ENCODE measurements at regions of chr16 and their contacts with region 1.

Region 1: DNA sequence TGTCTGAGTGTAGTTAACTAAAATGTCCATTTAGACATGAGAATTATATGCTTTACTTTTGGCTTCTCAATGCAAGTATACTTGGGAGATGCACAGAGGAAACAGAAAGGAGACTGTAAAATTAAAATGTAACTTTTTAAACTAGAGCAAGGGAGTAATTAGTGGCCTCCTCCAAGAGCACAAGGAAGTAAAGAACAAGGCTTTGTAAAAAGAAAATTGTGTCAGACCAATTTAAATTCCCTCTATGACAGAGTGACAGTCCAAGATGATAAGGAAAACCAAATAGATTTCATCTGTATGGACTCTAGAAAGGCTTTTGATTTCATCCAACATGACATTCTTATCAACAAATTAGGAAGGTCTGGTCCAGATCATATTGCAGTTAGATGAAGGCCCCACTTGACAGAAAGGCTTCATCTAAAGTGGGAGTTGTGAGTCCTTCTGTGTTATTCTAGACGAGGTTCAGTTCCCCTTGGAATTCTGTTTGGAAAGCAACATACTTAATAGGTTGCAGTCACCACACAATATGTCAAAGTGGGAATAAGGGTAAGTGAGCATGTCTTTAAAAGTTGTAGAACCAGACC is 6.5 kb upstream of the CAPNS2 start:
- DNase-seq: no peak
- ATAC-seq: no peak
- H3K4me3 ChIP-seq: no peak overlapping the region
- H3K27ac ChIP-seq: no peak overlapping the region
- H3K4me1 ChIP-seq: peaks cover 1% of the 10 kb centered on the region
- H3K27me3 ChIP-seq: no peaks in the 10 kb centered on the region
- CTCF ChIP-seq: no peak
- POLR2A ChIP-seq: no peak
- RAD21 ChIP-seq: no peak

Region 2: GRCh38 chr16:55534756-55535155 is 25.3 kb before region 1 on chr16:
- CTCF ChIA-PET with region 1: no interaction called
- POLR2A ChIA-PET with region 1: no interaction called
- dilution Hi-C with region 1: no loop called
- in situ Hi-C with region 1: no loop called
- intact Hi-C with region 1: loop called (anchors 1 kb)
- DNase-seq: no peak
- ATAC-seq: no peak
- H3K4me3 ChIP-seq: no peak overlapping the region
- H3K27ac ChIP-seq: no peak overlapping the region
- H3K4me1 ChIP-seq: no peaks in the 10 kb centered on the region; the same call in 1 of the 2 replicates
- H3K27me3 ChIP-seq: no peaks in the 10 kb centered on the region
- CTCF ChIP-seq: no peak
- POLR2A ChIP-seq: no peak
- RAD21 ChIP-seq: no peak

Region 3: DNA sequence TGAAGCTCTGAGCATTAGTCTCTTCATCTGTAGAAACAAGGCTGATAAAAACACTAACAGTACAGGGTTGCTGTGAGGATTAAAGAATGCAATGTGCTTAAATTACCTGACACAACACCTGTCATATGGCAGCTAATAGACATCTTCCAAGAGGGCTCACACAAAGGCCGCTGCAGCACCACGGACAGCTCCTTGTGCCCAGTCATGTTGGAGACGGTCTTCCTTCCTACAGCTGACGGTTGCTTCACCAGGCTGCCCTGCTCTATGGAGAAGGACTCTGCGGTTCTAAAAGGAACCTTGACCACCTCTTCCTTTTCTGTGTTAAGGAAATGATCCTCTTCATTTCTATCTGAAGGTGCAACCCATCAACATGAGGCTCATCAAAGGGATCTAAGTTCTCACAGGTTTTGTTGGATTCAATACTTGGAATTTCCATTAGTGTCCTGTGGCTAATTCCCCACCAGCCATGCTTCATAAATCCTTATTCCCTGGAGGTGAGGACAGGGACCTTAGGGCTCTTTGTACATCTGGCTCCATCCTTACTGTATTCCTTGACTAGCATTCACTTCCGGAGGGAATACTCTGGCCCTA is 454.0 kb after region 1 on chr16:
- CTCF ChIA-PET with region 1: no interaction called
- POLR2A ChIA-PET with region 1: no interaction called
- dilution Hi-C with region 1: no loop called
- in situ Hi-C with region 1: no loop called
- intact Hi-C with region 1: no loop called
- DNase-seq: peak; percentile 12
- ATAC-seq: no peak
- H3K4me3 ChIP-seq: no peak overlapping the region
- H3K27ac ChIP-seq: no peak overlapping the region
- H3K4me1 ChIP-seq: no peaks in the 10 kb centered on the region
- H3K27me3 ChIP-seq: no peaks in the 10 kb centered on the region
- CTCF ChIP-seq: no peak
- POLR2A ChIP-seq: no peak
- RAD21 ChIP-seq: no peak

Measured in IMR-90 (cell line).